Caco-2 (cell line): ENCODE measurements at regions of chr5 and their contacts with region 1.

Region 1: DNA sequence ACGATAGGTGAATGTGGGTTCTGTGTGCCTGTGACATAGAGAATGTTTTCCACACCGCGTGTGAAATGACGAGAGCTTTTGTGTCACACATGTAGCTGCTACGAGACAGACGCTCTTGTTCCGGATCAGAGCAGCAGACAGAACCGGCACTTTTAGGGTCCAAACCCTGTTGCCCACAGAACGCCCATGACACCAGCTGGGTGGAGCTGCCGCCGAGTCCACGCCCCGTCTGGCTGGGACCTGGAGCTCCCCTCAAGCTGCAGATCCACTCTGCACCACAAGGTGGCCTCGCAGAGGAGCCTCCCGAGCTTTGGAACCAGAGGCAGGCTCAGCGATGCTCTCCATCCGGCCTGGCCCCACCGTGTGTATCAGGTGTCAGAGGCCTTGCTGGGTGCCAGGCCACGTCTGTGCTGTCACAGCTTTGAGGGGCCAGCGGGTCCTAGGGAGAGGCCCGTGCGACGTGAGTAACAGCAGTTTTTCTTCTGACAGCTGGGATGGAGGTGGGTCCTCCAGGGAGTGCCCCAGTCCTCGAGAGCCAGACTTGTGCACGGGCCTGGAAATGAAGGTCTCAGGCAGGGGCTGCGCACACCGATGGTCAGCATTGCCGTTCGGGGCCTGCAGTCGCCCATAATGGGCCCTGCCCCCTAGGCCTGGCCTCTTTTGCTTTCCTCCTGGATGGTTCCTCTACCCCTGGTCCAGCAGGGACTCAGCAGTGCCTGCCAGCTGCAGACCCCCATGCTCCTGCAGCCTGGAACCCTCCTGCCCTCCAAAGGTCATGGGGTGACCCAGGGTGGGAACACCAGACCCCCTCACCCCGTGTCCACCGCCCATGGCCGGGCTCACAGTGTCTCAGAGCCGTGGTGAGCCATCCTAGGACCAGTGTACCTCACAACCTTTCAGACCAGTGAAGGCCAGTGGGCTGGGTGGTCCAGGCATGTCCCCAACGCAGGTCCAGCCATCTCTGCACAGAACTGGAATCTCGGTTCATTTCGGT is 2.5 kb upstream of the LRRC14B start:
- DNase-seq: peak; percentile 81 to 88
- H3K4me3 ChIP-seq: no peak overlapping the region
- H3K4me3 Mint-ChIP-seq: no peak overlapping the region
- H3K27ac Mint-ChIP-seq: no peak overlapping the region
- H3K4me1 ChIP-seq: no peaks in the 10 kb centered on the region
- H3K4me1 Mint-ChIP-seq: peaks cover 8% of the 10 kb centered on the region
- H3K27me3 ChIP-seq: no peaks in the 10 kb centered on the region
- H3K27me3 Mint-ChIP-seq: no peaks in the 10 kb centered on the region
- CTCF ChIP-seq: peak; percentile 90 to 91

Region 2: GRCh38 chr5:42243-42642 is 146.5 kb before region 1 on chr5:
- CTCF ChIA-PET with region 1: no interaction called
- POLR2A ChIA-PET with region 1: no interaction called
- intact Hi-C with region 1: loop called (anchors 1 kb)
- DNase-seq: peak; percentile 58 to 67
- H3K4me3 ChIP-seq: no peak overlapping the region
- H3K4me3 Mint-ChIP-seq: no peak overlapping the region
- H3K27ac Mint-ChIP-seq: no peak overlapping the region
- H3K4me1 ChIP-seq: 0 out of 2 replicates have a peak, but pooled peaks cover 2% of the 10 kb centered on the region
- H3K4me1 Mint-ChIP-seq: no peaks in the 10 kb centered on the region
- H3K27me3 ChIP-seq: no peaks in the 10 kb centered on the region; the same call in 1 of the 2 replicates
- H3K27me3 Mint-ChIP-seq: peaks cover 13% of the 10 kb centered on the region
- CTCF ChIP-seq: peak; percentile 61 to 70

Region 3: GRCh38 chr5:431001-431710 is 242.4 kb after region 1 on chr5:
- CTCF ChIA-PET with region 1: interaction called, 4 read pairs
- POLR2A ChIA-PET with region 1: no interaction called
- intact Hi-C with region 1: loop called (anchors 2 kb)
- DNase-seq: peak; percentile 74 to 81
- H3K4me3 ChIP-seq: no peak overlapping the region
- H3K4me3 Mint-ChIP-seq: no peak overlapping the region
- H3K27ac Mint-ChIP-seq: no peak overlapping the region
- H3K4me1 ChIP-seq: peaks cover 7% of the 10 kb centered on the region; the same call in 1 of the 2 replicates
- H3K4me1 Mint-ChIP-seq: no peaks in the 10 kb centered on the region
- H3K27me3 ChIP-seq: no peaks in the 10 kb centered on the region
- H3K27me3 Mint-ChIP-seq: peaks cover 2% of the 10 kb centered on the region
- CTCF ChIP-seq: peak; percentile 74 to 88

Region 4: GRCh38 chr5:485946-486491 is 297.2 kb after region 1 on chr5:
- CTCF ChIA-PET with region 1: no interaction called
- POLR2A ChIA-PET with region 1: no interaction called
- intact Hi-C with region 1: no loop called
- DNase-seq: no peak
- H3K4me3 ChIP-seq: no peak overlapping the region
- H3K4me3 Mint-ChIP-seq: no peak overlapping the region
- H3K27ac Mint-ChIP-seq: no peak overlapping the region
- H3K4me1 ChIP-seq: no peaks in the 10 kb centered on the region
- H3K4me1 Mint-ChIP-seq: no peaks in the 10 kb centered on the region
- H3K27me3 ChIP-seq: no peaks in the 10 kb centered on the region
- H3K27me3 Mint-ChIP-seq: no peaks in the 10 kb centered on the region
- CTCF ChIP-seq: no peak